ENCODE measurements at regions of chrX and their contacts with region 1.

Region 1: GRCh38 chrX:29746326-29746725 is 469.0 kb upstream of the MAGEB2 start:
- DNase-seq: no peak

Region 2: GRCh38 chrX:29724316-29724715 is 22.0 kb before region 1 on chrX:
- intact Hi-C with region 1: no loop called
- DNase-seq: no peak

Region 3: GRCh38 chrX:30795981-30796958 is 1049.9 kb after region 1 on chrX:
- intact Hi-C with region 1: loop called in 1 of 2 experiments (anchors 5 kb)
- DNase-seq: no peak

Measured in posterior vena cava (tissue), 2 donors.